T-cell (primary cell): ENCODE measurements at regions of chr3 and their contacts with region 1.

Region 1: DNA sequence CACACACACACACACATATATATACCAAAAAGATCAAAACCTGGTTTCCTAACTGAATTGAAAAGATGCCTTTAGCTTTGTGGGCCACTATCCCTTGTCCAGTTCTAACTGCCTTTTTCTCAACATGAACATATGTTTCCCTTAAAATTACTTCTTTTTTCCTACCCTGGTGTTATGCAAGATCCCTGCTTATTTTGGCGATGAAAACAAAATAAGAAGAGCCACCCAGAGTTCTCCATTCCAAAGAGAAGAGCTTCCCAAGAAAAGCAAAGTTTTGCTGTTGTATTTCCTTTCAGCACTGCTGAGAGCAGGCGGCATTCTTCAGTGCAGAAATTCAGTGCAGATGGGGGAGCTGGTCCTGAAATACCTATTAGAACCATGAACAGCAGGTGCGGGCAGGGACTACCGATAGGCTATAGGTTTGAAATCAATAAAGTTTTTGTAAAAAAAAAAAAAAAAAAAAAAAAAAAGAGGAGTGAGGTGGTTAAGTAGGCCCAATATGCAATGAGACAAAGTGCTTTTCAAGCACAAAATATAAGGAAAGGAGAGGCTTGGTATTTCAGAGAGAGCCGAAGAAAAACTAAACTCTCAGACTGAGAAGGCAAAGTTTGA is 238.0 kb downstream of the FOXP1 start:
- DNase-seq: peak in 1 of 35 experiments; percentile 25
- ATAC-seq: no peak
- H3K4me3 ChIP-seq: no peak overlapping the region
- H3K4me3 Mint-ChIP-seq: no peak overlapping the region
- H3K27ac ChIP-seq: no peak overlapping the region
- H3K27ac Mint-ChIP-seq: peak overlapping the region in 1 of 2 donors; percentile 13
- H3K4me1 ChIP-seq: peaks cover 4 to 8% of the 10 kb centered on the region in 2 experiments
- H3K4me1 Mint-ChIP-seq: peaks cover 39 to 67% (median 59%) of the 10 kb centered on the region in 3 donors
- H3K27me3 ChIP-seq: no peaks in the 10 kb centered on the region
- H3K27me3 Mint-ChIP-seq: no peaks in the 10 kb centered on the region

Region 2: GRCh38 chr3:71360764-71361163 is 15.2 kb after region 1 on chr3:
- CTCF ChIA-PET with region 1: no interaction called
- POLR2A ChIA-PET with region 1: interaction called in 1 of 2 experiments, 14 read pairs
- DNase-seq: peak in 4 of 35 experiments; percentile 4 to 34 (median 16)
- ATAC-seq: peak; percentile 58 to 78 (median 74)
- H3K4me3 ChIP-seq: no peak overlapping the region
- H3K4me3 Mint-ChIP-seq: peak overlapping the region; percentile 46 to 67 (median 61)
- H3K27ac ChIP-seq: peak overlapping the region; percentile 28
- H3K27ac Mint-ChIP-seq: peak overlapping the region; percentile 84 to 86
- H3K4me1 ChIP-seq: peaks cover 24 to 27% of the 10 kb centered on the region in 2 experiments
- H3K4me1 Mint-ChIP-seq: peaks cover 72 to 87% (median 81%) of the 10 kb centered on the region in 3 donors
- H3K27me3 ChIP-seq: no peaks in the 10 kb centered on the region
- H3K27me3 Mint-ChIP-seq: no peaks in the 10 kb centered on the region

Region 3: DNA sequence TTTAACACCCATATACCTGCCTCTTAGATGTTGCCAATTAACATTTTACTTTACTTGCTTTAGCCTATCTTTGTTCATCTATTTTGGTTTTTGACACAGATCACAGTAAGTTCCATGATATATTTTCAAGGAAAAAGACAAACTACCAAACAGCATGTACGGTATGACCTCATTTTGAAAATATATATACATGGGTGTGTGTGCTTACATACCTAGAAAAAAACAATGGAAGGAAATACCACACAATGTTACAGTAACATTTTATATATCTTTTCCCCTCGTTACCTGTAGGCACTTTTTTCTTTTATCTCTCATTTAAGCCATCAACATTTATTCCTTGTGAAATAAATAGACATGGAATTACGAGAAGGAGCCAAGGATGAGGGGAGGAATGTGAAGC is 68.0 kb after region 1 on chr3:
- CTCF ChIA-PET with region 1: no interaction called
- POLR2A ChIA-PET with region 1: no interaction called
- DNase-seq: no peak
- ATAC-seq: no peak
- H3K4me3 ChIP-seq: no peak overlapping the region
- H3K4me3 Mint-ChIP-seq: peak overlapping the region in 1 of 3 donors; percentile 11
- H3K27ac ChIP-seq: no peak overlapping the region
- H3K27ac Mint-ChIP-seq: peak overlapping the region; percentile 23 to 64
- H3K4me1 ChIP-seq: peaks cover 30 to 39% of the 10 kb centered on the region in 2 experiments
- H3K4me1 Mint-ChIP-seq: peaks cover 93 to 97% (median 93%) of the 10 kb centered on the region in 3 donors
- H3K27me3 ChIP-seq: no peaks in the 10 kb centered on the region
- H3K27me3 Mint-ChIP-seq: no peaks in the 10 kb centered on the region

Region 4: DNA sequence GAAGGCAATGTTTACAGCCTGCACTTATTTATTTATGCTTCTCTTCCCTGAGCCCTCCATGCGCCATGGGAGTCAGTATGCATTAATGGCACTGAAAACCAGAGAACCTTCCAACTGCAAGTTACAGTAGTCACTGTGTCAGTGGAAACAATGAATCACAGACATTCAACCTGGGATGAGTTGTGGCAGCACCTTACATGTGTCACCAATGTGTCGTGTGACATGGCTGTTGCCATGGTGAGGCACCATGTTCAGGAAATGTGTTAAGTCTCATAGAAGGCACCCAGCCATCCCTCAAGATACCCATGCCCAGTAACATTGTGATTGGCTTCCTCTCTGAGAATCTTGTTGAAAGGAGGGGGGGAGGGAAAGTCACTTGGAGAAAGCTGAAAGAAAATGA is 133.0 kb after region 1 on chr3:
- CTCF ChIA-PET with region 1: no interaction called
- POLR2A ChIA-PET with region 1: no interaction called
- DNase-seq: peak in 19 of 35 experiments; percentile 14 to 67 (median 39)
- ATAC-seq: peak; percentile 74 to 87 (median 80)
- H3K4me3 ChIP-seq: no peak overlapping the region
- H3K4me3 Mint-ChIP-seq: peak overlapping the region in 2 of 3 donors; percentile 71 to 77
- H3K27ac ChIP-seq: no peak overlapping the region
- H3K27ac Mint-ChIP-seq: peak overlapping the region; percentile 82 to 99
- H3K4me1 ChIP-seq: peaks cover 21 to 41% of the 10 kb centered on the region in 2 experiments
- H3K4me1 Mint-ChIP-seq: peaks cover 84 to 92% (median 87%) of the 10 kb centered on the region in 3 donors
- H3K27me3 ChIP-seq: no peaks in the 10 kb centered on the region
- H3K27me3 Mint-ChIP-seq: no peaks in the 10 kb centered on the region